A549 (cell line): ENCODE measurements at regions of chr17 and their contacts with region 1.

Region 1: DNA sequence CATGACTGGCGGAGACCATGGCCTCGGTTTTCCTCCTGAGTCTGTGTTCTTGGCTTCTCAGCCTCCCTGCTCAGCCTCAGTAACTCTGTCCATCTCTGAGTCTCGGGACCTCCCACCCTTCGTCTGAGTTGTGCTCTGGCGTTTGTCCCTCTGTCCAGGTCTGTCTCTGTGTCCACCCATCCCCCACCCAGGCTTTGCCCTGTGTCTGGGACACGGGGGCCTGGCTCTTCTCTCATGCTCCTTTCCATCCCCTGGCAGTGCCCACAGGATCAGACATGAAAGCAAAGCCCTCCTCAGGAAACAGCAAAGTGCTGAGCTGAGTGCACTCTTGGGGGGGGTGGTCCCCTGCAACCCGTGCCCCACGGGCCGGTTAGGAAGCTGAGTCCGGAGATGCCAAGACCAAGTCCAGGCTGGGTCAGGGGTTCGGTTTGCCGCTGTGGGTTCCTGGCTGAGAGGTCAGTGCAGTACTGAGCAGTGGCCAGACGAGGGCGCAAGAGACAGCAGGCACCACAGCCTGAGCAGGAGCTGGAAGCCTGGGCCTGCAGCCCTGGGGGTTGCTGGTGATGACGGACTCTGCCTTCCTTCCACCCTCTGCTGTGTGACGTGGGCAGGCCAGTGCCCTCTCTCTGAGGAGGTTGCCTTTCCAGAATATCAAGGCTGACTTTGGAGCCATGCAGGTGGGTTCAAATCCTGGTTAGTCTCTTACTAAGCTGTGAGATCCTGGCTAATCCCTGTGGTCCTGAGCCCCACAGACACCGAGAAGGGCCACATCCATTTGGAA is 2.5 kb downstream of the P2RX1 start:
- DNase-seq: peak; percentile 77 to 91
- ATAC-seq: peak; percentile 73 to 92
- H3K4me3 ChIP-seq: no peak overlapping the region
- H3K27ac ChIP-seq: peak overlapping the region in 1 of 2 experiments; percentile 65; a peak in 3 of 6 replicates
- H3K4me1 ChIP-seq: peaks cover 21% of the 10 kb centered on the region; the same call in 2 of the 3 replicates
- CTCF ChIP-seq: peak; percentile 94
- EP300 ChIP-seq: no peak
- POLR2A ChIP-seq: no peak
- RAD21 ChIP-seq: peak; percentile 88 to 91

Region 2: DNA sequence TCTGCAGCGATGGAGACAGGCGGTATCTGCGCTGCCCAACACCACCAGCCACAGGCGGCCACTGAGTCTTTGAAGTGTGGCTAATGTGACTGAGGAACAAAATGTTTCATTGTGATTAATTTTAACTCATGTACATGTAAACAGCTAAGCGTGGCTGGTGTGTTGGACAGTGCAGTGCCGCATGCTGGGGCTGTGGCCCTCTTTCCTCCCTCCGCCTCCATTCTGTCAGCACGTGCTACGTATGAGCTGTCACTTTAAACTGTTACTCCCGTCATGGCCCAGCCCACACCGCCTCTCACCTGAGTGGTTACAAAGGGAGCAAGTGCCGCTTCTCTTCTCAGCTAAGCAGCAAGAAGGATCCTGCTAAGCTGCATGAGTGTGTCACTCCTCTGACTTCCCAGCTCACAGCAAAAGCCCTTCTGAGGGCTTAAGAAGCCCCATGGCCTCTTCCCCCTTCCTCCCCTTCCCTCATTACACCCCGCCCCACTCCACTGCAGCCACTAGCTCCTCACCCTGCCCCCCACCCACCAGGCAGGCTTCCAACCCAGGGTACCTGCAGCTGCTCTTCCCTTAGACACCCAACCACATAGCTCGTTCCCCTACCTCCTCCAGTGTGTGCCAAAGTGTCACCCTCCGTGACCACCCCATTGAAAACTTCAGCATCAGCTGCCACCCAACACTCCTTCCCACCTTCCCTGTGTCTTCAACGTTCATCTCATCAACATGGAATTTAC is 175.0 kb before region 1 on chr17:
- CTCF ChIA-PET with region 1: interaction called, 64 read pairs
- POLR2A ChIA-PET with region 1: no interaction called
- DNase-seq: no peak
- ATAC-seq: 0 out of 6 replicates have a peak, but pooled peaks of 1 of the 2 experiments have one; percentile 10
- H3K4me3 ChIP-seq: no peak overlapping the region
- H3K27ac ChIP-seq: peak overlapping the region in 1 of 2 experiments; percentile 25; a peak in 1 of 6 replicates
- H3K4me1 ChIP-seq: peaks cover 3% of the 10 kb centered on the region; the same call in 1 of the 3 replicates
- CTCF ChIP-seq: no peak
- EP300 ChIP-seq: no peak
- POLR2A ChIP-seq: no peak
- RAD21 ChIP-seq: no peak

Region 3: DNA sequence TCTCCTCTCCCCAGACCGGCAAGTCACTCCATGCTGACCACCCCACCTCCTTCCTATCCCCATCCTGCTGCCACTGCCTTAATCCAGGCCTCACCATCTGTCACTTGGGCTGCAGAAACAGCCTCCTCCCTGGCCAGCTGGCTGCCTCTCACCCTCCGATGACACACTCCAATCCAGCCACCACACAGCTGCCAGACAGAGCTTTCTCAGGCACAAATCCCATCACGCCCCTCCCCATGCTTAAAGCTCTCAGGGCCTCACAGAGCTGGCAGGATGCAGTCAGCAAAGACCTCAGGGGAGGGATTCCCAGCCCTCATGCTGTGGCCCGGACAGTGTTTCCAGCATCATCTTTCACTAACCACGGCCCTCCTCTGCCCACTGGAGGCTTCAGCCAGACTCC is 34.5 kb before region 1 on chr17:
- CTCF ChIA-PET with region 1: interaction called, 31 read pairs
- POLR2A ChIA-PET with region 1: no interaction called
- DNase-seq: no peak
- ATAC-seq: peak in 1 of 2 experiments; percentile 12; a peak in 1 of 6 replicates
- H3K4me3 ChIP-seq: no peak overlapping the region
- H3K27ac ChIP-seq: no peak overlapping the region
- H3K4me1 ChIP-seq: no peaks in the 10 kb centered on the region
- CTCF ChIP-seq: no peak
- EP300 ChIP-seq: no peak
- POLR2A ChIP-seq: no peak
- RAD21 ChIP-seq: no peak

Region 4: GRCh38 chr17:3935140-3935542 is 21.4 kb after region 1 on chr17:
- CTCF ChIA-PET with region 1: interaction called, 43 read pairs
- POLR2A ChIA-PET with region 1: no interaction called
- DNase-seq: peak; percentile 84 to 87
- ATAC-seq: peak; percentile 96 to 98
- H3K4me3 ChIP-seq: no peak overlapping the region
- H3K27ac ChIP-seq: no peak overlapping the region
- H3K4me1 ChIP-seq: no peaks in the 10 kb centered on the region; the same call in 2 of the 3 replicates
- CTCF ChIP-seq: peak; percentile 70
- EP300 ChIP-seq: no peak
- POLR2A ChIP-seq: no peak
- RAD21 ChIP-seq: peak; percentile 79 to 90

Region 5: GRCh38 chr17:3965118-3965803 is 51.5 kb after region 1 on chr17:
- CTCF ChIA-PET with region 1: interaction called, 21 read pairs
- POLR2A ChIA-PET with region 1: interaction called, 3 read pairs
- DNase-seq: peak; percentile 83 to 92
- ATAC-seq: peak; percentile 86 to 94
- H3K4me3 ChIP-seq: peak overlapping the region; percentile 55
- H3K27ac ChIP-seq: peak overlapping the region; percentile 74 to 86
- H3K4me1 ChIP-seq: peaks cover 24% of the 10 kb centered on the region
- CTCF ChIP-seq: no peak
- EP300 ChIP-seq: no peak
- POLR2A ChIP-seq: peak; percentile 64
- RAD21 ChIP-seq: peak; percentile 40 to 45; a peak in 3 of 5 replicates

Region 6: GRCh38 chr17:4017377-4017776 is 103.7 kb after region 1 on chr17:
- CTCF ChIA-PET with region 1: interaction called, 23 read pairs
- POLR2A ChIA-PET with region 1: no interaction called
- DNase-seq: no peak
- ATAC-seq: peak; percentile 5 to 42; a peak in 3 of 6 replicates
- H3K4me3 ChIP-seq: no peak overlapping the region
- H3K27ac ChIP-seq: no peak overlapping the region
- H3K4me1 ChIP-seq: no peaks in the 10 kb centered on the region
- CTCF ChIP-seq: peak; percentile 25; the same call in 1 of the 3 replicates
- EP300 ChIP-seq: no peak
- POLR2A ChIP-seq: no peak
- RAD21 ChIP-seq: no peak

Region 7: DNA sequence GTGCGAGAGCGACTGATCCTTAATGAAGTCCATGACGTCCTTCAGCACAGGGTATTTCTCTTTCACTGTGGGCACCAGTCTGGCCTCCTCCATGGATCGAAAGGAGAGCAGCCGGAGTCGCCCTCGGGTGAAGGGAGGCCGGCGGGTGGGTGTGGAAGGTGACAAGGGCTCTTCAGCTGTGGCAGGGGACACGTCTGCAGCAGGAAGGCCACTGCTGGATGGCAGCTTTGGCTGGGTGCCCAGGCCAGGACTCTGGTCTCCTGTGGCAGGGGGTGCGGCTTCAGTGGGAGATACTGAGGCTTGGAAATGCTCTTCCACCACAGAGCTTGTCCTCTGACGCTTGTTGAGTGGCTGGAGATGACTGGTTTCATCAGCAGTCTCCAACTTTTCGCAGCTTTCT is 150.6 kb after region 1 on chr17:
- CTCF ChIA-PET with region 1: interaction called, 21 read pairs
- POLR2A ChIA-PET with region 1: no interaction called
- DNase-seq: no peak
- ATAC-seq: no peak
- H3K4me3 ChIP-seq: no peak overlapping the region
- H3K27ac ChIP-seq: no peak overlapping the region
- H3K4me1 ChIP-seq: no peaks in the 10 kb centered on the region
- CTCF ChIP-seq: no peak
- EP300 ChIP-seq: no peak
- POLR2A ChIP-seq: no peak
- RAD21 ChIP-seq: no peak